PC-9 (cell line): ENCODE measurements at regions of chr14 and their contacts with region 1.

Region 1: DNA sequence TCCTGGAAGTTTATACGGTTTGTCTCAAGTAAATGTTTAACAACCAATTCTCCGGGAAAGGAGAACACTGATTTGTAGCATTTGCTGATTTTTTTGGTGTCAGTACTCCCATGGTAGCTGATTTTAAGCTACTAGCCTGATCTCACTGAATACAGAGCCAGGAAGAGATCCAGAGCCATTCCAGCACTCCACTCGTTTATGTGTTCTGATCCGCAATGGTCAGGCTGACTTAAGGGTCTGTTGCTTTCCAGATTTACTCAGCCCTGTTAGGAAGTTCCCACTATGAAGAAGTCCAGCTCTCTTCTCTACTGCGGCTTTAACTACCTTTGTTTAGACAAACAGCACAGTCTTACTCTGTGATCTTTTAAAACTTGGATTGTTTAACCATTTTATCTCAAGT is 38.0 kb upstream of the NID2 start:
- DNase-seq: no peak
- H3K4me3 ChIP-seq: no peak overlapping the region
- H3K27ac ChIP-seq: no peak overlapping the region
- H3K4me1 ChIP-seq: peaks cover 2% of the 10 kb centered on the region; the same call in 1 of the 2 replicates
- H3K27me3 ChIP-seq: no peaks in the 10 kb centered on the region
- CTCF ChIP-seq: no peak

Region 2: DNA sequence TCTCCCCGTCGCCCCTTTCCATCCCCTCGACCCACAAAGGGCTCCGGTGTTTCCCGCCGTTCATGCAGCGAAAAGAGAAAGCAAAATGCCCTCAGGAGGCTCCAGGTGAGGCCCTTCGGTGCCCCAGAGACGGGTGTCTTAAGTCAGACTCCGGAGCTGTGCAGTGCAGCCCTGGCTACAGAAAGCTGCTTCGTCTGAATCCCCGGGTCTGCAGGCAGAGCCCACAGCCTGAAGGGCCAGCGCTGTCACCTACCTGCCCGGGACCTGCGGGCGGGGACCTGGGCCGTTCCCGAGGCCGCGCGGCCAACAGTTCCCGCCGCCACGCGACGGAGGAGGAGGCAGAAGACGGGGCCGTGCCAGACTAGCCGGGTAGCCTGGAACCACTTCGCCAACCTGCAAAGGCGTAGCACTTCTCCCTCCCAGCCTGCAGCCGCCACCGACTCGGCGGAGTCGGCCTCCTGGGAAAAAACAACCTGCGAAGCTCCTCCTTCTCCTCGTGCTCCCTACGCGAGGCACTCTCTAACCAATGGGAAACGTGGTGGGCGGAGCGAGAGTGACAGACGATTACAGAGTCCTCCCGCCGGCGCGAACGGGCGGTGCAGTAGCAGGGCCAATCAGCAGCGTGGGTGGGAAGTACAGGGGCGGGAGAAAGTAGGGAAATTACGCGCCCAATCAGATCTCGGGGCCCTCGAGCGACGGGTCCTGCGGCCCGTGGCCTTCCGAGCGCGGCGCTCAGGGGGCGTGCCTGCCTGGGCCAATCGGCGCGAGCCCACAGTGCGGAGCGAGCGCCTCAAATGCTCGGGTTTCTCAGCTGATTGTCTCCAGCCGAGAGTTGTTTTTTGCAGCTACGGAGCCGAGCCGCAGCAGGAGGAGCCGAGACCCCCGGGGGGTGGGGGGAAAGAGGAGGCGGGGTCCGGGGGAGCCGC is 445.5 kb after region 1 on chr14 and contains the starts of genes GPR137C and TXNDC16:
- CTCF ChIA-PET with region 1: no interaction called
- POLR2A ChIA-PET with region 1: interaction called, 13 read pairs
- intact Hi-C with region 1: no loop called
- DNase-seq: peak; percentile 96 to 99
- H3K4me3 ChIP-seq: peak within 1 kb of the TSS; percentile 65
- H3K27ac ChIP-seq: peak within 1 kb of the TSS; percentile 33; the same call in 1 of the 2 replicates
- H3K4me1 ChIP-seq: peaks cover 21% of the 10 kb centered on the region
- H3K27me3 ChIP-seq: no peaks in the 10 kb centered on the region
- CTCF ChIP-seq: no peak
- total RNA-seq, gene GPR137C: 1.1 and 1.2 TPM in 2 replicates
- total RNA-seq, gene TXNDC16: 5.7 and 7.9 TPM in 2 replicates